Tibial artery (tissue), 4 donors: ENCODE measurements at regions of chr22 and their contacts with region 1.

Region 1: DNA sequence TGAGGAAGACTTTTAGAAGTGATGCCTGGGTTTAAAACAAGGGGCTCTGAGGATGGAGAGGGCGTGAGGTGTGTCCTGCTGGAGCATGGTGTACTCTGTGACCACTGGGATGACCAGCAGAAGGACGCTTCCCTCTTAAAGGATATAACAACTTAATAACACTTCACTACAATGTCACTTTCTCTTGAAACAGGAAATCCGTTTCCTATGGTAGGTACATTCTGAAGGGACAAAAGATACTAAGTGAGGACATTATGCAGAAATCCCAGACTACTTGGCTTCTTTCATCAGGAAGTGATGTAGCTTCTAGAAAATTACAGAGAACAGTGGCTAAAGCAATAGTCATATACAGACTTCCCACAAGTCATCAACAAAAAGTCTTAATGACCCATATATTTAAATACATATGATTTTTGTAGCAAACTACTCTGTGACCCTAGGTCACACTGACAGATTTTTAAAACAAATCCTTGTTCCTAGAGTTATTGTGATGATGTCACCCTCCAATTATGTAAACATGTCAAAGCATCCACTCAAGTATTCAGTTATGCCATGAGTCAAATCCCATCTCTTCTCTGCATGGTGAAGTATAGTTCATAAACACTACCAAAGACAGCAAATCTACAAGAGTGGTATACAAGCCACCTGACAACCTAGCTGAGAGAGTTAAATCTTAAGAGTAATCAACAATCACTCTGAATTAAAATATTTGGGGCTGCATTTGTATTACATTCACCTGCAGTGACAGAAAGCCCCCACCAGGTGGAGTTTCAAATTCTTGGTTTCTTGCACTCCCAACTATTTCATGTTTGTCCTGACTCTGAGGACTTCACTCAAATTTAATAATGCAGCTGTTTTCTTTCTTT is 32.8 kb downstream of the PITPNB start:
- DNase-seq: peak in 1 of 2 donors; percentile 40
- H3K4me3 ChIP-seq: no peak overlapping the region
- H3K27ac ChIP-seq: peak overlapping the region in 1 of 2 donors; percentile 57
- H3K4me1 ChIP-seq: peaks cover 0 to 56% (median 28%) of the 10 kb centered on the region in 4 donors
- H3K27me3 ChIP-seq: no peaks in the 10 kb centered on the region
- CTCF ChIP-seq: peak; percentile 82 to 94

Region 2: GRCh38 chr22:27919222-27919941 is 33.2 kb after region 1 on chr22 and contains the start of gene PITPNB:
- intact Hi-C with region 1: loop called (anchors 2 kb)
- DNase-seq: peak; percentile 93 to 99
- H3K4me3 ChIP-seq: peak within 1 kb of the TSS; percentile 74 to 92
- H3K27ac ChIP-seq: peak within 1 kb of the TSS; percentile 94 to 97
- H3K4me1 ChIP-seq: peaks cover 0 to 55% (median 24%) of the 10 kb centered on the region in 4 donors
- H3K27me3 ChIP-seq: no peaks in the 10 kb centered on the region
- CTCF ChIP-seq: no peak

Region 3: GRCh38 chr22:27990879-27991278 is 104.7 kb after region 1 on chr22:
- intact Hi-C with region 1: loop called (anchors 5 kb)
- DNase-seq: peak; percentile 83 to 86
- H3K4me3 ChIP-seq: no peak overlapping the region
- H3K27ac ChIP-seq: peak overlapping the region; percentile 59 to 62
- H3K4me1 ChIP-seq: peaks cover 0 to 15% (median 4%) of the 10 kb centered on the region in 4 donors
- H3K27me3 ChIP-seq: no peaks in the 10 kb centered on the region
- CTCF ChIP-seq: peak; percentile 51

Region 4: DNA sequence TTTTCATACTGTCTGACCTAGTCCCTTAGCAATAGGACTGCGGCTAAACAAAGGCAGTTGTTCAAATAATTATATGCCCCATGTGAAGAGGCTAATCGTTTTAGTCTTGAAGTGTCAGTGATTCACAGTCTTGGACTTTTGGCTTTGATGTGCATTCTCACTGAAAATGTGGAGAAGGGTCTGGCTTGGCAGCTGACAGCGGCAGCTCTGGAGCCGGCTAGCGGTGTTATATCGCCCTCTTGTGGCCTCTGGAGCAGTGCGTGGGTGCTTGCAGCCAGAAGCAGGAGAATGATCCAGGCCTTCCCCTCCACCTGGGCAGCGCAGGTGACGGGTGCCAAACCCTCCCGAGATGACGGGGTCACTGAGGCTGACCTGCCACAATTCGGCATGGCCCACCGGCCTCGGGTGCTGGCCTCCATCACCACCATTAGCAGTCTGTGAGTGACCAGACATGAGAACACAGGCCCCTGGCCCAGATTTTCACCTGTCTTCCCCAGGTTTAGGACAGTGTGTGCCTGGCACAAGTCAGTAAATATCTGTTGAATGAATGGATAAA is 123.1 kb after region 1 on chr22:
- intact Hi-C with region 1: loop called (anchors 2 kb)
- DNase-seq: peak; percentile 54 to 80
- H3K4me3 ChIP-seq: no peak overlapping the region
- H3K27ac ChIP-seq: peak overlapping the region in 1 of 2 donors; percentile 12
- H3K4me1 ChIP-seq: peaks cover 0 to 7% (median 4%) of the 10 kb centered on the region in 4 donors
- H3K27me3 ChIP-seq: no peaks in the 10 kb centered on the region
- CTCF ChIP-seq: peak; percentile 95 to 97